Naive thymus-derived CD4-positive, alpha-beta T cell (primary cell): ENCODE measurements at regions of chr22 and their contacts with region 1.

Region 1: DNA sequence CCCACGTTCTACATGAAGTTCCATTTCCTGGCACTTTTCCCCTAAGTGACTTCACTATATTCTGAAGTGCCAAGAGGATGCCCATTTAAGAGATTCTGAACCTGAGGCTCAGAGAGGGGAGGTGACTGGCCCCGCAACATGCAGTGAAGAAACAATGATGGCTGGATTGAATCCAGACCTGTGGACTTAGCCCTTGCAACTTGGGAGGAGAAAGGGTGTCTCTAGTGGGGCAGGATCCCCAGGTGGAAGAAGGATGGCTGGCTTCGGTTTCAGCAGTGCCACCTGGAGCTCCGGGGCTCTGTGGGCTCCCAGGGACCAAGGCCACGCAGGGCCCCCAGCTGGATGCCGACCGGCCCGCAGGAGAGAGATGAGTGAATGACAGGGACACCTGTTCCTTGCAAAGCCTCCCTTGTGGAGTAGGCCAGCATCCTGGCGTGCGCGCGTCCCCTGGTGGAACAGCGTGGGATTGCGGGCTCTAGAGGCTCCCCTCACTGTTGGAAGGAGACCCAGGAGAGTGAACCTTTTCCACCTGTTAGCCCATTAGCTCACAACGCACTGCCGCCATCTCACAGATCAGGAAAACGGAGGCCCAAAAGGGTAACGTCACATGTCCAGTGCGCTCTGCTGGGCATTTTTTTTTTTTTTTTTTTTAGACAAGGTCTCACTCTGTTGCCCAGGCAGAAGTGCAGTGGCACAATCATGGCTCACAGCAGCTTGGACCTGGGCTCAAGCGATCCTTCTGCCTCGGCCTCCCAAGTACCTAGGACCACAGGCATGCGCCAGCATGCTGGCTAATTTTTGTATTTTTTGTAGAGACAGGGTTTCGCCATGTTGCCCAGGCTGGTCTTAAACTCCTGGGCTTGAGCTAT is 104.7 kb downstream of the KIAA1671 start:
- DNase-seq: peak; percentile 23 to 86 (median 64)
- ATAC-seq: peak; percentile 76
- H3K4me3 ChIP-seq: no peak overlapping the region
- H3K4me3 Mint-ChIP-seq: no peak overlapping the region
- H3K27ac ChIP-seq: no peak overlapping the region
- H3K27ac Mint-ChIP-seq: peak overlapping the region in 3 of 9 donors; percentile 67 to 75 (median 72)
- H3K4me1 ChIP-seq: peaks cover 16 to 18% of the 10 kb centered on the region in 2 donors
- H3K4me1 Mint-ChIP-seq: peaks cover 19 to 42% (median 26%) of the 10 kb centered on the region in 7 donors
- H3K27me3 ChIP-seq: no peaks in the 10 kb centered on the region
- H3K27me3 Mint-ChIP-seq: no peaks in the 10 kb centered on the region

Region 2: GRCh38 chr22:24938741-24939341 is 118.4 kb before region 1 on chr22:
- CTCF ChIA-PET with region 1: interaction called, 5 read pairs
- POLR2A ChIA-PET with region 1: no interaction called
- intact Hi-C with region 1: loop called (anchors 1 kb)
- DNase-seq: peak in 6 of 9 donors; percentile 25 to 48 (median 34)
- ATAC-seq: peak; percentile 73
- H3K4me3 ChIP-seq: no peak overlapping the region
- H3K4me3 Mint-ChIP-seq: no peak overlapping the region
- H3K27ac ChIP-seq: no peak overlapping the region
- H3K27ac Mint-ChIP-seq: no peak overlapping the region
- H3K4me1 ChIP-seq: no peaks in the 10 kb centered on the region
- H3K4me1 Mint-ChIP-seq: no peaks in the 10 kb centered on the region
- H3K27me3 ChIP-seq: peaks cover 0 to 4% of the 10 kb centered on the region in 2 donors
- H3K27me3 Mint-ChIP-seq: peaks cover 0 to 15% (median 4%) of the 10 kb centered on the region in 5 donors

Region 3: GRCh38 chr22:25067851-25068421 is 10.7 kb after region 1 on chr22:
- CTCF ChIA-PET with region 1: interaction called, 10 read pairs
- POLR2A ChIA-PET with region 1: interaction called, 16 read pairs
- intact Hi-C with region 1: loop called (anchors 1 kb)
- DNase-seq: peak; percentile 56 to 95 (median 92)
- ATAC-seq: peak; percentile 94
- H3K4me3 ChIP-seq: peak overlapping the region; percentile 43
- H3K4me3 Mint-ChIP-seq: peak overlapping the region; percentile 81 to 94 (median 87)
- H3K27ac ChIP-seq: peak overlapping the region; percentile 76
- H3K27ac Mint-ChIP-seq: peak overlapping the region; percentile 86 to 99 (median 98)
- H3K4me1 ChIP-seq: peaks cover 63 to 67% of the 10 kb centered on the region in 2 donors
- H3K4me1 Mint-ChIP-seq: peaks cover 51 to 96% (median 89%) of the 10 kb centered on the region in 7 donors
- H3K27me3 ChIP-seq: no peaks in the 10 kb centered on the region
- H3K27me3 Mint-ChIP-seq: no peaks in the 10 kb centered on the region

Region 4: DNA sequence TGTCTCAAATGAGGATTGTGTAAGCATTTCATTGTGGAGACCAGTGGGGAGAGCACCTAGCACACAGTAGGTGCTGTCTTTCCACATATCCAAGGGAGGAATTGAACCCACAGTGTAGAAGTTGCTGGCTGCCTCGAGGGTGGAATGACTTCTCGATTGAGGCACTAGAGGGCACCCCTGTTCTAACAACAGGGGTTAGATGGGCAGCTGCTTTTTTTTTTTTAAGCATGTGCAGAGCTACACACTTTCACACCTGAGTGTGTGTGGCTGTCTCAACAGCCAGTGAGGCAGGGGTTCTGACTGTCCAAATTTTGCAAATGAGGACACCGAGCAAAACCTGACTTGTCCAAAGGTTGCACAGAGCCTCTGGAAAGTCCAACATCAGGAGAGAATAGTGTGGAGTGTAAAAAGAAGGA is 24.2 kb after region 1 on chr22:
- CTCF ChIA-PET with region 1: interaction called, 27 read pairs
- POLR2A ChIA-PET with region 1: interaction called, 19 read pairs
- intact Hi-C with region 1: loop called (anchors 1 kb)
- DNase-seq: peak in 8 of 9 donors; percentile 30 to 59 (median 50)
- ATAC-seq: peak; percentile 77
- H3K4me3 ChIP-seq: no peak overlapping the region
- H3K4me3 Mint-ChIP-seq: no peak overlapping the region
- H3K27ac ChIP-seq: no peak overlapping the region
- H3K27ac Mint-ChIP-seq: peak overlapping the region in 7 of 9 donors; percentile 17 to 83 (median 69)
- H3K4me1 ChIP-seq: peaks cover 24 to 28% of the 10 kb centered on the region in 2 donors
- H3K4me1 Mint-ChIP-seq: peaks cover 27 to 66% (median 44%) of the 10 kb centered on the region in 7 donors
- H3K27me3 ChIP-seq: no peaks in the 10 kb centered on the region
- H3K27me3 Mint-ChIP-seq: no peaks in the 10 kb centered on the region

Region 5: DNA sequence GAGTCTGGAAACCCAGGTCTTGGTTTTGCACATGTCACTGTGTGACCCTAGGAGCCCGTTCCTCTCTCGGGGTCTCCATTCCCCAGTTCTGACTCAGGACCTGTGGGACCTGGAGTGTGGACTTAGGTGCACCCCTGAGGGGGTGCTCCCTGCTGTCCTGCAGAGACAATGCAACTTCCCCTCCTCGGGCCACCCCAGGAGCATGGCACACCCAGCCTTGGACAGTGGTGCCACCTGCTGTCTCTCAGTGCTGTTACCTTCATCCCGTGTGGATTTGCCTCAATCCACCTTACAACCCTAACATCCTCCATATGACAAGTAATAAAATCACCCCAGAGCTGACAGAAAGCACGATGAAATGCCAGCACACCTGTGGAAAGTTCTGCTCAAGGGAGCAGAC is 114.9 kb after region 1 on chr22:
- CTCF ChIA-PET with region 1: interaction called, 7 read pairs
- POLR2A ChIA-PET with region 1: no interaction called
- intact Hi-C with region 1: loop called (anchors 1 kb)
- DNase-seq: peak in 7 of 9 donors; percentile 8 to 40 (median 23)
- ATAC-seq: peak; percentile 58
- H3K4me3 ChIP-seq: no peak overlapping the region
- H3K4me3 Mint-ChIP-seq: no peak overlapping the region
- H3K27ac ChIP-seq: no peak overlapping the region
- H3K27ac Mint-ChIP-seq: peak overlapping the region in 1 of 9 donors; percentile 51
- H3K4me1 ChIP-seq: no peaks in the 10 kb centered on the region
- H3K4me1 Mint-ChIP-seq: no peaks in the 10 kb centered on the region
- H3K27me3 ChIP-seq: no peaks in the 10 kb centered on the region
- H3K27me3 Mint-ChIP-seq: no peaks in the 10 kb centered on the region

Region 6: GRCh38 chr22:25853501-25854284 is 796.4 kb after region 1 on chr22:
- CTCF ChIA-PET with region 1: no interaction called
- POLR2A ChIA-PET with region 1: no interaction called
- intact Hi-C with region 1: no loop called
- DNase-seq: no peak
- ATAC-seq: no peak
- H3K4me3 ChIP-seq: no peak overlapping the region
- H3K4me3 Mint-ChIP-seq: no peak overlapping the region
- H3K27ac ChIP-seq: no peak overlapping the region
- H3K27ac Mint-ChIP-seq: no peak overlapping the region
- H3K4me1 ChIP-seq: no peaks in the 10 kb centered on the region
- H3K4me1 Mint-ChIP-seq: no peaks in the 10 kb centered on the region
- H3K27me3 ChIP-seq: no peaks in the 10 kb centered on the region
- H3K27me3 Mint-ChIP-seq: peaks cover 0 to 23% (median 9%) of the 10 kb centered on the region in 5 donors